ENCODE measurements at regions of chr5 and their contacts with region 1.

Region 1: DNA sequence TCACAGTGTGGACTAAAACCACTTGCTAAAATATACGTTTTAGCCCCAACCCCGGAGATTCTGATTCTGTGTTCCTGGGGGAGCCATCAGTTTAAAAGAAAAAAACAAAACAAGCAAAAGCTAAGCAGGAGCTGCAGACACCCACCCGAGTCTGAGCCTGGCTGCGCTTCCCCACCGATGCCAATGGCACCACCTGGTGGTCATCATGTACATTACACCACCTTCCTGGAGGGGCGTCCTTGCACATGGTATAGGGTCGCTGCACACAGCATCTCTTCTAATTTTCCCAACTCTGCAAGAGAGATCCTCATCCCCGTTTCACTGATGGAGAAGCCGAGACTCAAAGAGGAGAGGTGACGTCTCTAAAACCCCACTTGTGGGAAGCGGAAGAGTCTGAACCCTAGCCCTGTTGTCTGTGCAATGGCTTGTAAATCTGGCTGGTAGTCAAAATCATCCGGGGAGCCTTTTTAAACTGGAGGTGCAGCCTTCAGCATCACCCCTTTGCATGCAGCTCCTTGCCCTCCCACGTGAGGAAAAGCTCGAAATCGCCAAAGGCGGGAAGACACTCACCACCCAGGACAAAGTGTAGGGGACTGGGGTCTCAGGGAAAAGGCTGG is 23.1 kb upstream of the CNOT6 start:
- DNase-seq: peak; percentile 72
- H3K4me3 Mint-ChIP-seq: no peak overlapping the region
- H3K27ac Mint-ChIP-seq: no peak overlapping the region
- H3K4me1 Mint-ChIP-seq: peaks cover 18% of the 10 kb centered on the region
- H3K27me3 Mint-ChIP-seq: no peaks in the 10 kb centered on the region
- CTCF ChIP-seq: peak; percentile 100

Region 2: GRCh38 chr5:180291943-180292831 is 178.9 kb before region 1 on chr5 and contains the start of gene MAPK9:
- CTCF ChIA-PET with region 1: interaction called, 212 read pairs
- POLR2A ChIA-PET with region 1: interaction called, 37 read pairs
- intact Hi-C with region 1: loop called (anchors 1 kb)
- DNase-seq: peak; percentile 89
- H3K4me3 Mint-ChIP-seq: peak within 1 kb of the TSS; percentile 71
- H3K27ac Mint-ChIP-seq: peak within 1 kb of the TSS; percentile 81
- H3K4me1 Mint-ChIP-seq: peaks cover 52% of the 10 kb centered on the region
- H3K27me3 Mint-ChIP-seq: no peaks in the 10 kb centered on the region
- CTCF ChIP-seq: no peak
- total RNA-seq, gene MAPK9: 64.0 and 70.8 TPM in 2 replicates

Region 3: GRCh38 chr5:180328296-180329137 is 142.6 kb before region 1 on chr5:
- CTCF ChIA-PET with region 1: interaction called, 167 read pairs
- POLR2A ChIA-PET with region 1: interaction called, 9 read pairs
- intact Hi-C with region 1: loop called (anchors 1 kb)
- DNase-seq: peak; percentile 97
- H3K4me3 Mint-ChIP-seq: no peak overlapping the region
- H3K27ac Mint-ChIP-seq: no peak overlapping the region
- H3K4me1 Mint-ChIP-seq: peaks cover 40% of the 10 kb centered on the region
- H3K27me3 Mint-ChIP-seq: no peaks in the 10 kb centered on the region
- CTCF ChIP-seq: peak; percentile 93

Region 4: DNA sequence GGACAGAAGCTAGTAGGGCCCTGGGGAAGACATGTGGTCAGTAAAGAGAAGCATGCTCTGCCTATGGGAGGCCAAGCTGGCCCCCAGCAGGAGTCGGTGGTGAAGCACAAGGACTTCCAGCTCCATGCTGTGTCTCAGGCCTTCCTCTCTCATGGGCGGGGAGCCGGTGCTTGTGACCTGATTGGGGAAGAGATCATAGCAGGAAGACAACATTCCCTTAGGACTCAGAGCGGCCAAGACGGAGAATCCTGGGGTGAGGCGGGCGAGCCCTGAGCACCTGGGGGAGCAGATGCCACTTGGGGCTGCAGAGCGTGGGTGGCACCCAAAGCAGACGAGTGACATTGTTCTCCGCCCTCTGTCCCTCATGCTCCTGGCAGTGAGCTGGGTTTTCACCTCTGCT is 10.2 kb before region 1 on chr5:
- CTCF ChIA-PET with region 1: interaction called, 22 read pairs
- POLR2A ChIA-PET with region 1: interaction called, 4 read pairs
- intact Hi-C with region 1: no loop called
- DNase-seq: no peak
- H3K4me3 Mint-ChIP-seq: no peak overlapping the region
- H3K27ac Mint-ChIP-seq: no peak overlapping the region
- H3K4me1 Mint-ChIP-seq: peaks cover 7% of the 10 kb centered on the region
- H3K27me3 Mint-ChIP-seq: no peaks in the 10 kb centered on the region
- CTCF ChIP-seq: no peak

Region 5: DNA sequence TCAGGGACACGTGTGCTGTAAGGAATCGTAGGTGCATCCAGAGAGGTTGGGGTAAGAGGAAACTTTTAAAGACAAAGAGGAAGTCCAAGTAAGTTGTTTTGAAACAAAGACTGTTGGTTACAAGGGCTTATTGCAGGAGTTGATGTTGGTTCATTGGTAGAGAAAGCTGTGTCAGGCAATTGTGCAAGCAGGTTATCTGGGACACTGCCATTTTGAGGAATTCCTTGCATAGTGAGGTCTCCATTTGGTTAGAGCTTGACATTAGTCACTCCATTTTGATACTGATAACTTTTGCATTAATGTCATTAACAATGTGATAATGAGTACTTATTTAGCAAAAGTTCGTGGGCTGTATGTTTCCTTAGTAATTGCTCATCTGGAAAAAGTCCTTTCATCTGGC is 48.0 kb after region 1 on chr5:
- CTCF ChIA-PET with region 1: interaction called, 12 read pairs
- POLR2A ChIA-PET with region 1: no interaction called
- intact Hi-C with region 1: no loop called
- DNase-seq: no peak
- H3K4me3 Mint-ChIP-seq: no peak overlapping the region
- H3K27ac Mint-ChIP-seq: peak overlapping the region; percentile 37
- H3K4me1 Mint-ChIP-seq: peaks cover 55% of the 10 kb centered on the region
- H3K27me3 Mint-ChIP-seq: no peaks in the 10 kb centered on the region
- CTCF ChIP-seq: no peak

Region 6: GRCh38 chr5:180848878-180849277 is 377.8 kb after region 1 on chr5:
- CTCF ChIA-PET with region 1: no interaction called
- POLR2A ChIA-PET with region 1: no interaction called
- intact Hi-C with region 1: no loop called
- DNase-seq: no peak
- H3K4me3 Mint-ChIP-seq: no peak overlapping the region
- H3K27ac Mint-ChIP-seq: no peak overlapping the region
- H3K4me1 Mint-ChIP-seq: peaks cover 4% of the 10 kb centered on the region
- H3K27me3 Mint-ChIP-seq: no peaks in the 10 kb centered on the region
- CTCF ChIP-seq: peak; percentile 10